MCF 10A (cell line): ENCODE measurements at regions of chr5 and their contacts with region 1.

Region 1: GRCh38 chr5:149731639-149732323 is 1.7 kb downstream of the PPARGC1B start:
- DNase-seq: peak; percentile 95
- H3K4me3 Mint-ChIP-seq: peak overlapping the region; percentile 94
- H3K27ac Mint-ChIP-seq: peak overlapping the region; percentile 66
- H3K4me1 Mint-ChIP-seq: peaks cover 27% of the 10 kb centered on the region
- H3K27me3 Mint-ChIP-seq: no peaks in the 10 kb centered on the region
- CTCF ChIP-seq: no peak

Region 2: GRCh38 chr5:149749481-149750365 is 17.9 kb after region 1 on chr5:
- CTCF ChIA-PET with region 1: interaction called, 11 read pairs
- POLR2A ChIA-PET with region 1: interaction called, 274 read pairs
- intact Hi-C with region 1: loop called (anchors 2 kb)
- DNase-seq: peak; percentile 90
- H3K4me3 Mint-ChIP-seq: peak overlapping the region; percentile 45
- H3K27ac Mint-ChIP-seq: peak overlapping the region; percentile 63
- H3K4me1 Mint-ChIP-seq: peaks cover 64% of the 10 kb centered on the region
- H3K27me3 Mint-ChIP-seq: no peaks in the 10 kb centered on the region
- CTCF ChIP-seq: no peak

Region 3: DNA sequence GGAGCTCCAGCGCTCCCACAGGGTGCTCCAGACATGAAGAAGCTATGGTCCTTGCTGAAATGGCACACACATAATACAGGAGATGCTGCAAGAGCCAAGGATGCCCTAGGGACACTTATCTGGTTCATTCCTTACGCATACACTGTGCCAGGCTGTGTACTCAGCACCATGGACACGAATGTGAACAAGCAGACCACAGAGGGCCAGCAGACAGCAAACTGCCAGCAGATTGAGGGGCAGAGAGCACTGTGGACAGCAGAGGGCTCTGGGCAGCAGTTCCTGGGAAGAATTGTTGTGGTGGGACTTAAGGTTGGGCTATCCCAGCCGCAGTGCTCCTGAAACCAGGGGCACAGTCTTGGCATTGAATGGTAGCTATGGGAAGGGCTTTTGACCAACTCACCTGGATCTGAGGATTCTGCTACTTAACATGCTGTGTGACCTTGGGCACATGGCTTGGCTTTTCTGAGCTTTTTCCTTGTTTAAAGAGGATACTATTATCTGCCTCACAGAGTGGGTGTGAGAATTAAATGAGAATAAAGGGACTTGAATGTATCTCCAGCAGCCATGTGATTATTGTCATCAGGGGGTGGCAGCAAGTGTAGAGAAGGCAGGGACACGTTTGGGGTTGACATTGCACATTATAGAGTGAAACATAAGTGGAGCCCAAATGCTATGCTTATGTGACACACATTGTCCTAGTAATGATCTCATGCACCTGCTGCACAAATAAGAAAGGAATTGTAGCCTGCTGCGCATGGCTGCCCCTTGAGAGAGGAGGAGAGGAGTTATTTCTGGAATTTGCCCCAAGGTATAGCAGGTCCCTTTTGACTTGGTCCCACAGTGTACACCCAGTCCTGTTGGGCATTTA is 28.4 kb after region 1 on chr5:
- CTCF ChIA-PET with region 1: interaction called, 4 read pairs
- POLR2A ChIA-PET with region 1: interaction called, 14 read pairs
- intact Hi-C with region 1: no loop called
- DNase-seq: no peak
- H3K4me3 Mint-ChIP-seq: no peak overlapping the region
- H3K27ac Mint-ChIP-seq: no peak overlapping the region
- H3K4me1 Mint-ChIP-seq: peaks cover 22% of the 10 kb centered on the region
- H3K27me3 Mint-ChIP-seq: no peaks in the 10 kb centered on the region
- CTCF ChIP-seq: no peak

Region 4: DNA sequence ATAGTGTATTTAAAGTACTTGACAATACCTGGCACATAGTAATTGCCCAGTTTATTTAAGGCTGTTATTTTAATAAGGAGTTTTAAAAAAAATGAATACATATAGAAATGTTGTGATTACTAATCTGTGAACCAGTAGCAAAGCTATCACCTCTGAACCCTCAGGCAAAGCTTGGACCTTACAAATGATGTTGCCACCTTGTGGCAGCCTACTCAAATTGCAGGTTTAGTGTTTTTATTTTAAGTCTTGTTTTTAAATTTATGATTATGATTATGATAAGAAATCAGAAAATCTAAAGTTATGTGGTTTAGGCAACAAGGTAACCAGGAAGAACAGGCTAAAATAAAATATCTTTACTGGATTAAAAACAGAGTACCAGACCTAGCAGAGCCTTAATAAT is 34.2 kb after region 1 on chr5:
- CTCF ChIA-PET with region 1: interaction called, 4 read pairs
- POLR2A ChIA-PET with region 1: interaction called, 14 read pairs
- intact Hi-C with region 1: no loop called
- DNase-seq: peak; percentile 59
- H3K4me3 Mint-ChIP-seq: no peak overlapping the region
- H3K27ac Mint-ChIP-seq: no peak overlapping the region
- H3K4me1 Mint-ChIP-seq: peaks cover 10% of the 10 kb centered on the region
- H3K27me3 Mint-ChIP-seq: no peaks in the 10 kb centered on the region
- CTCF ChIP-seq: peak; percentile 44

Region 5: GRCh38 chr5:149775785-149776184 is 44.0 kb after region 1 on chr5:
- CTCF ChIA-PET with region 1: interaction called, 4 read pairs
- POLR2A ChIA-PET with region 1: interaction called, 7 read pairs
- intact Hi-C with region 1: loop called (anchors 5 kb)
- DNase-seq: peak; percentile 63
- H3K4me3 Mint-ChIP-seq: no peak overlapping the region
- H3K27ac Mint-ChIP-seq: no peak overlapping the region
- H3K4me1 Mint-ChIP-seq: peaks cover 43% of the 10 kb centered on the region
- H3K27me3 Mint-ChIP-seq: no peaks in the 10 kb centered on the region
- CTCF ChIP-seq: peak; percentile 61

Region 6: GRCh38 chr5:149799119-149799623 is 67.4 kb after region 1 on chr5:
- CTCF ChIA-PET with region 1: interaction called, 6 read pairs
- POLR2A ChIA-PET with region 1: interaction called, 11 read pairs
- intact Hi-C with region 1: no loop called
- DNase-seq: peak; percentile 93
- H3K4me3 Mint-ChIP-seq: peak overlapping the region; percentile 12
- H3K27ac Mint-ChIP-seq: peak overlapping the region; percentile 43
- H3K4me1 Mint-ChIP-seq: peaks cover 38% of the 10 kb centered on the region
- H3K27me3 Mint-ChIP-seq: no peaks in the 10 kb centered on the region
- CTCF ChIP-seq: no peak

Region 7: GRCh38 chr5:149804478-149805450 is 73.0 kb after region 1 on chr5:
- CTCF ChIA-PET with region 1: interaction called, 6 read pairs
- POLR2A ChIA-PET with region 1: interaction called, 33 read pairs
- intact Hi-C with region 1: loop called (anchors 5 kb)
- DNase-seq: no peak
- H3K4me3 Mint-ChIP-seq: no peak overlapping the region
- H3K27ac Mint-ChIP-seq: peak overlapping the region; percentile 57
- H3K4me1 Mint-ChIP-seq: peaks cover 39% of the 10 kb centered on the region
- H3K27me3 Mint-ChIP-seq: no peaks in the 10 kb centered on the region
- CTCF ChIP-seq: no peak